Endothelial cell of umbilical vein (primary cell): ENCODE measurements at regions of chr10 and their contacts with region 1.

Region 1: GRCh38 chr10:74081192-74081803 is 69.3 kb downstream of the AP3M1 start:
- DNase-seq: peak; percentile 75
- H3K4me3 ChIP-seq: no peak overlapping the region
- H3K27ac ChIP-seq: peak overlapping the region; percentile 90
- H3K4me1 ChIP-seq: peaks cover 50% of the 10 kb centered on the region
- H3K27me3 ChIP-seq: no peaks in the 10 kb centered on the region
- CTCF ChIP-seq: peak; percentile 75 to 77
- POLR2A ChIP-seq: no peak

Region 2: GRCh38 chr10:73865459-73866442 is 215.5 kb before region 1 on chr10:
- CTCF ChIA-PET with region 1: no interaction called
- POLR2A ChIA-PET with region 1: no interaction called
- dilution Hi-C with region 1: no loop called
- intact Hi-C with region 1: no loop called
- DNase-seq: no peak
- H3K4me3 ChIP-seq: no peak overlapping the region
- H3K27ac ChIP-seq: no peak overlapping the region
- H3K4me1 ChIP-seq: peaks cover 14% of the 10 kb centered on the region
- H3K27me3 ChIP-seq: no peaks in the 10 kb centered on the region
- CTCF ChIP-seq: no peak
- POLR2A ChIP-seq: no peak

Region 3: GRCh38 chr10:73879296-73880173 is 201.8 kb before region 1 on chr10:
- CTCF ChIA-PET with region 1: interaction called, 10 read pairs
- POLR2A ChIA-PET with region 1: no interaction called
- dilution Hi-C with region 1: no loop called
- intact Hi-C with region 1: no loop called
- DNase-seq: peak; percentile 82
- H3K4me3 ChIP-seq: no peak overlapping the region
- H3K27ac ChIP-seq: no peak overlapping the region
- H3K4me1 ChIP-seq: peaks cover 6% of the 10 kb centered on the region
- H3K27me3 ChIP-seq: no peaks in the 10 kb centered on the region
- CTCF ChIP-seq: peak; percentile 93 to 98
- POLR2A ChIP-seq: no peak

Region 4: GRCh38 chr10:73956476-73957359 is 124.6 kb before region 1 on chr10:
- CTCF ChIA-PET with region 1: interaction called, 7 read pairs
- POLR2A ChIA-PET with region 1: no interaction called
- dilution Hi-C with region 1: no loop called
- intact Hi-C with region 1: loop called (anchors 2 kb)
- DNase-seq: peak; percentile 33
- H3K4me3 ChIP-seq: no peak overlapping the region
- H3K27ac ChIP-seq: no peak overlapping the region
- H3K4me1 ChIP-seq: peaks cover 10% of the 10 kb centered on the region
- H3K27me3 ChIP-seq: no peaks in the 10 kb centered on the region
- CTCF ChIP-seq: no peak
- POLR2A ChIP-seq: no peak

Region 5: DNA sequence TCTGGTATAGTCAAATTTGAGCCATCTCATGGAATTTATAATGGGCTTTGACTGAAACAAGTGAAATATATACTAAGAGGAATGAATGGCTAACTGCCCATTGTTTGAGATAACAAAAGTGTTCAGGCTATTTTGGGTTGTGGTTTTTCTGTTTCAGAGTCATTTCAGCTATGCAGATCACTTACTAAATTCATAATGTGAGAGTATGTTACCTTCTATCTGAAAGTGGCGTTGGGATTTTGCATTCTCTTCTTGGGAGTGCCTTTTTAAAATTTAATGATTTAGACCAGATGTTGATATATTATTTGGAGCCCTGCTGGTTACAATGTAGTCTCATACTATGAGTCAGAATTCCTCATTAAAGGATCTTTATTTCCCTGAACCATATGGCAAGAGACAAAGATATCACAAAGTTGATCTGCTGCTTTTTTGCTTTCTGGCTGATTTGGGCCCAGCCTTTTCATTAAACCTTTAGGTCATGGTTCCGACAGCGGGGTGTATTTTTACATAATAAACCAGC is 73.0 kb before region 1 on chr10:
- CTCF ChIA-PET with region 1: interaction called, 21 read pairs
- POLR2A ChIA-PET with region 1: interaction called, 5 read pairs
- dilution Hi-C with region 1: no loop called
- intact Hi-C with region 1: no loop called
- DNase-seq: peak; percentile 54
- H3K4me3 ChIP-seq: no peak overlapping the region
- H3K27ac ChIP-seq: peak overlapping the region; percentile 58
- H3K4me1 ChIP-seq: peaks cover 34% of the 10 kb centered on the region
- H3K27me3 ChIP-seq: no peaks in the 10 kb centered on the region
- CTCF ChIP-seq: no peak
- POLR2A ChIP-seq: no peak

Region 6: DNA sequence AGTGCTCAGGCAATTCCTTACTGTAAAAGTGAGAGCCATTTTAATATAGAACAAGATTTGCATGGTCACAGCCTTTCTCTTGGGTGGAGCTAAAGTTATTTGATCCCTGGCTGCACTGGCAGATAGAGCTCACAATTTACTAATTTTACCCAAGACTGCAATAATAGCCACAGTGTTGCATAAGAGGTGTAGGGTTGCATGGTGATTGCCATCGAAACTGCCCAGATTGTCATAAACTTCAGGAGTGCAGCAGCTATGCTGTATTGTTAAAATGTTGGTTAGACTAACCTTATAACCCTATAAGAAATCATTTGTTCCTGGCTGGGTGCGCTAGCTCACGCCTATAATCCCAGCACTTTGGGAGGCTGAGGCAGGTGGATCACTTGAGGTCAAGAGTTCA is 33.4 kb before region 1 on chr10:
- CTCF ChIA-PET with region 1: interaction called, 32 read pairs
- POLR2A ChIA-PET with region 1: no interaction called
- dilution Hi-C with region 1: no loop called
- intact Hi-C with region 1: no loop called
- DNase-seq: no peak
- H3K4me3 ChIP-seq: no peak overlapping the region
- H3K27ac ChIP-seq: no peak overlapping the region
- H3K4me1 ChIP-seq: no peaks in the 10 kb centered on the region
- H3K27me3 ChIP-seq: no peaks in the 10 kb centered on the region
- CTCF ChIP-seq: no peak
- POLR2A ChIP-seq: no peak

Region 7: GRCh38 chr10:74176380-74177139 is 95.3 kb after region 1 on chr10:
- CTCF ChIA-PET with region 1: no interaction called
- POLR2A ChIA-PET with region 1: no interaction called
- dilution Hi-C with region 1: no loop called
- intact Hi-C with region 1: no loop called
- DNase-seq: peak; percentile 95
- H3K4me3 ChIP-seq: peak overlapping the region; percentile 32 to 80 (median 39)
- H3K27ac ChIP-seq: peak overlapping the region; percentile 41
- H3K4me1 ChIP-seq: peaks cover 15% of the 10 kb centered on the region
- H3K27me3 ChIP-seq: no peaks in the 10 kb centered on the region
- CTCF ChIP-seq: no peak
- POLR2A ChIP-seq: peak; percentile 91